Gastrocnemius medialis (tissue), 4 donors: ENCODE measurements at regions of chr2 and their contacts with region 1.

Region 1: GRCh38 chr2:178414266-178415247 is 36.4 kb downstream of the PRKRA start:
- DNase-seq: peak; percentile 93 to 95
- ATAC-seq: peak; percentile 91 to 92
- H3K4me3 ChIP-seq: peak overlapping the region; percentile 62 to 77 (median 68)
- H3K27ac ChIP-seq: peak overlapping the region; percentile 82 to 88 (median 86)
- H3K4me1 ChIP-seq: peaks cover 8 to 14% of the 10 kb centered on the region in 2 donors
- H3K27me3 ChIP-seq: no peaks in the 10 kb centered on the region
- CTCF ChIP-seq: peak; percentile 85 to 93 (median 89)
- POLR2A ChIP-seq: peak; percentile 31 to 73

Region 2: DNA sequence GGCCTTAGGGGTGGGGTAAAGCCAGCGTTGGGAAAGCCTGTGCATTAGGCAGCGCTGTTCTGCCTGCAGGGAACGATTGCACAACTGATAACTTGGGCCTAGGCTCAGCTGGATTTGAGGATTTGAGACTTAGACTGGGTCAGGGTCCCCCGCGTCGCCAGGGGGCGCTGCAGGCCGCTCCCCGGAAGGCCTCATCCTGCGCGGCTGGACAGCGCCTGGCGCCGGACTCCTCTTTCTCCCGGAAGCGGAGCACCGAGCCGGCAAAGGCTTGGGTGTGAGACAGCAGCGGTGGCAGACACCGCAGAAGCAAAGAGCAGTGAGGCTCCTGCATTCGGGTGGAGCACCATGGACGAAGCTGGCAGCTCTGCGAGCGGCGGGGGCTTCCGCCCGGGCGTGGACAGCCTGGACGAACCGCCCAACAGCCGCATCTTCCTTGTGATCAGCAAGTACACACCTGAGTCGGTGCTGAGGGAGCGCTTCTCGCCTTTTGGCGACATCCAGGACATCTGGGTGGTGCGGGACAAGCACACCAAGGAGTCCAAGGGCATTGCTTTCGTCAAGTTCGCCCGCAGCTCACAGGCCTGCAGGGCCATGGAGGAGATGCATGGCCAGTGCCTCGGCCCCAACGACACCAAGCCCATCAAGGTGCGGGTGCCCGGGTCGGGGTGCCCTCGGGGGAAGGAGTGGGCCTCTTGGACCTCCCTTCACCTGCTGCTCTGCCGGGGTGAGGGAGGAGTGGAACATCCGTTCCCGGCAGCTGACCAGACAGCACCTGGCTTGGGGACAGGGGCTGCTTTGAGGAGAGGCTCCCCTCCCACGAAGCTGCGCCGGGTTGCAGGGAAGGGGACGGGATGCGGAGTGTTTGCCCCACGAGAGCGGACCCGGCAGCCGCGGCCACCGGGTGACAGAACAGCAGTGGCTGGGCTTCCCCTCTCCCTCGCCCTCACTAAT is 302.1 kb before region 1 on chr2 and contains the start of gene RBM45:
- in situ Hi-C with region 1: no loop called
- intact Hi-C with region 1: loop called (anchors 5 kb)
- DNase-seq: peak; percentile 83 to 94
- ATAC-seq: peak; percentile 96 to 97
- H3K4me3 ChIP-seq: peak within 1 kb of the TSS; percentile 88 to 94 (median 91)
- H3K27ac ChIP-seq: peak within 1 kb of the TSS; percentile 78 to 89 (median 84)
- H3K4me1 ChIP-seq: peaks cover 13 to 18% of the 10 kb centered on the region in 2 donors
- H3K27me3 ChIP-seq: no peaks in the 10 kb centered on the region
- CTCF ChIP-seq: peak; percentile 93 to 98 (median 98)
- POLR2A ChIP-seq: peak; percentile 26 to 61
- total RNA-seq, gene RBM45: 2.0 to 8.1 (median 5.5) TPM

Region 3: DNA sequence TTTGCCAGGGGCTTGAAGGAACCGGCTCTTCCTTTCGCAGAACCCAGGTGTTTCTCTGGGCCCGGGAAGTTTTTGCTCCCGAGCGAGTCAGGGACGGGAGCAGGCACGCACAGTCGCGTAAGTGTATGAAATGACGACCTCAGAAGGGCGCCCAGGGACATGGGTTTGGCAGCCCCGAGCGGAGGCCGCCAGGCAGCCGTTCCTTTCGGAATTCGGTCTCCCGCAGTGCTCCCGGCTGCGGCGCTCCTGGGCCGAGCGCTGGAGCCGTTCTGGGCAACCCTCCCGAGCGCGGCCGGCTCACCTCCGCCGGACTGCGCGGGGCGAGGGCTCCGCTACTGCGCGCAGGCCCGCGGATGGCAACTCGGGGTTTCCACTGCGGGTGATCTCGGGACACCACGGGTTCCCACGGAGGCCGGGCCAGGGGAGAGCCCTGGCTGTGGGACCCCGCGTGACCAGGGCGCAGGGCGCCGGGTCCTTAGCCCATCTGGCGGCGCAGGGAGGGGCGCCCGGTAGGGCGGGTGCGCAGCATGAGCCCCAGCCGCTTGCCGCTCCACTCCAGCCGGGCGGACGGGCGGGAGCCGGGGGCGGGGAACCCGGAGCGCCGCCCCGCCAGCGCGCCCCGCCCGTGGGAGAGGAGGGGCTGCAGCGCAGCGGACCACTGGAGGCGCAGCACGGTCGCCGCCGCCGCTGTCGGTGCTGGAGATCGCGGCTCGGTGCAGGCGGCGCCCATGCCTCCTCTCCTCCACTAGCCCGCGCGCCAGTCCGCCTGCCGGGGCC is 220.5 kb before region 1 on chr2 and contains the start of gene OSBPL6:
- in situ Hi-C with region 1: no loop called
- intact Hi-C with region 1: loop called (anchors 5 kb)
- DNase-seq: peak; percentile 82 to 88
- ATAC-seq: peak; percentile 86
- H3K4me3 ChIP-seq: peak within 1 kb of the TSS; percentile 76 to 98 (median 84)
- H3K27ac ChIP-seq: peak within 1 kb of the TSS; percentile 92 to 98 (median 94)
- H3K4me1 ChIP-seq: peaks cover 21 to 30% of the 10 kb centered on the region in 2 donors
- H3K27me3 ChIP-seq: no peaks in the 10 kb centered on the region
- CTCF ChIP-seq: peak in 4 of 5 experiments; percentile 52 to 67 (median 62)
- POLR2A ChIP-seq: peak; percentile 88 to 91
- total RNA-seq, gene OSBPL6: 11.6 to 51.1 (median 40.7) TPM

Region 4: DNA sequence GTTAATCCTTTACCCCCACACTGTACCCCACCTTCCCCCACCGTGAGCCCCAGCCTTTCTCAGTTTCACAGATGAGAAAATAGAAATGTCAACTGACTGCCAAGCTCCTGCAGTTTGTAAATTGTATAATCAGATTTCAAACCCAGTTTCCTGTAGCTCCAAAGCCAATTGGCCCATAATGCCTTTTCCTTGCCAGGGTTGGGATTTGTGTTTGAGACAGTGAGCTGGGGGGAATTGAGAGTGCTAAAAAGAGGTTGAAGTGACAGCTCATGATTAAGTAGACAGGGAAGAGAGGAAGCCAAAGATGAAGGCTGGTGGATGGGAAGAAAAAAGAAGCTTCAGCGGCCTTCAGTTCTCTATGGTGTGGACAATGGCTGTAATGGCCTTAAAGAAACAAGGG is 209.6 kb before region 1 on chr2:
- in situ Hi-C with region 1: no loop called
- intact Hi-C with region 1: no loop called
- DNase-seq: no peak
- ATAC-seq: peak in 1 of 2 donors; percentile 17
- H3K4me3 ChIP-seq: no peak overlapping the region
- H3K27ac ChIP-seq: peak overlapping the region; percentile 0 to 67 (median 42)
- H3K4me1 ChIP-seq: peaks cover 29 to 66% of the 10 kb centered on the region in 2 donors
- H3K27me3 ChIP-seq: no peaks in the 10 kb centered on the region
- CTCF ChIP-seq: no peak
- POLR2A ChIP-seq: no peak

Region 5: DNA sequence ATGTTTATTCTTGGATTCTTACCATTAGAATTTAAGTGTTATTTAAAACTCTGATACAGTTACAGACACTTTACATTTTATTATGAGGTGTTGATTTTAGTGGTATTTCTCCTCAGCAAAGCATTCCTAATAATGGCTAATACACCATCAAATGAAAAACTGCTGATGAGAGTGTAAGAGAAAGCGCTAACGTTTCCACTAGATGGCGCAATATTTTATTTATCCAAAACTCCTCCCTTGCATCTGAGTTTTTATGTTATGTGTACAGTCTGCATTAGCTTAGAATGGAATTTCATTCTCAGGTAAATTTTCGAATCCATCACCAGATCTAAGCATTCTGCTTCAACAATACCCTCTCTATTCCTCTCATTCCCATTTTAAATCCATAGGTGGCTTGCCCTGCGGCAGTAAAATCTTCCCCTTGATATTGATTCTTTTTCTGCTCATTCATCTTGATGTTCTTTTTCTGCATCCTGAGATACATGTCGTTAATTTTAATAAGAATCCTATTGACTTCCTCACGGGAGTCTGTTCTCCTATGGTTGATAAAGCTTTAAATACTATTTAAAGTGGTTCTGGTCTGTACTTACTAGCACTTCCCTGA is 17.5 kb before region 1 on chr2:
- in situ Hi-C with region 1: no loop called
- intact Hi-C with region 1: loop called (anchors 1 kb)
- DNase-seq: no peak
- ATAC-seq: peak; percentile 57 to 63
- H3K4me3 ChIP-seq: no peak overlapping the region
- H3K27ac ChIP-seq: no peak overlapping the region
- H3K4me1 ChIP-seq: no peaks in the 10 kb centered on the region
- H3K27me3 ChIP-seq: no peaks in the 10 kb centered on the region
- CTCF ChIP-seq: peak; percentile 35 to 70 (median 56)
- POLR2A ChIP-seq: no peak

Region 6: GRCh38 chr2:178478439-178479274 is 64.1 kb after region 1 on chr2 and contains the start of gene FKBP7:
- in situ Hi-C with region 1: no loop called
- intact Hi-C with region 1: loop called (anchors 1 kb)
- DNase-seq: peak; percentile 78 to 80
- ATAC-seq: peak; percentile 60 to 69
- H3K4me3 ChIP-seq: peak within 1 kb of the TSS; percentile 61 to 80 (median 74)
- H3K27ac ChIP-seq: peak within 1 kb of the TSS; percentile 84 to 95 (median 92)
- H3K4me1 ChIP-seq: peaks cover 35 to 38% of the 10 kb centered on the region in 2 donors
- H3K27me3 ChIP-seq: no peaks in the 10 kb centered on the region
- CTCF ChIP-seq: peak; percentile 59 to 79 (median 69)
- POLR2A ChIP-seq: peak; percentile 84 to 87
- total RNA-seq, gene FKBP7: 1.4 to 5.0 (median 3.3) TPM